A673 (cell line): ENCODE measurements at regions of chr1 and their contacts with region 1.

Region 1: DNA sequence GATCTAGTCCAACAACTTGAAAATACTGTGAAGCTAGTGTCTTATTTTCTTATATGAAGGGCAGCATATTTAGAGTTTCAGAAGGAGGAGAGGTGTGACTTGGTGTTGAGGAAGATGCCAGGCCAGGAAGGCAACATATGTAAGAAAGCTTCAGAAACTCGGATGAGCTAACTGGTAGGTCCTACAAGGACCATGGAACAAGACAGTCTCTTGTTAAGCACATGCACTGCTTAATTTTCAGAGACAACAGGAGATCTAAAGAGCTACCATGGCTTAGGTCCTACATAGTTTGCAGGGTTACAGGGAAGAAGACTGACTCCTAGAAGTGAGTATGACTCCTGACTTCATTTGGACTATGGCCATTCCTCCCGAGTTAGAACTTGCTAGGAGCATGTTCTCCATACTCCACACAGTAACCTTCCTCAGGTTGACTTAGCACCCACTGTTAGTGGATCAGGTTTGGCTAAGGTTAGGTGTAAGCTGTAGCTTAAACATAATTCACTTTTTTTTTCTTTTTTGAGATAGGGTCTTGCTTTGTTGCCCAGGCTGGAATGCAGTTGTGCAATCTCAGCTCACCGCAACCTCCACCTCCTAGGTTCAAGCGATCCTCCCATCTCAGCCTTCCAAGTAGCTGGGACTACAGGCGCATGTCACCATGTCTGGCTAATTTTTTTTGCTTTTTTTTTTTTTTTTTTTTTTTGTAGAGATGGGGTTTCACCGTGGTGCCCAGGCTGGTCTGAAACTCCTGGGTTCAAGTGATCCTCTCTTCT is 31.0 kb downstream of the ANGEL2 start:
- DNase-seq: no peak
- H3K4me3 ChIP-seq: no peak overlapping the region
- H3K27ac ChIP-seq: no peak overlapping the region
- H3K4me1 ChIP-seq: no peaks in the 10 kb centered on the region
- H3K27me3 ChIP-seq: no peaks in the 10 kb centered on the region
- CTCF ChIP-seq: no peak

Region 2: DNA sequence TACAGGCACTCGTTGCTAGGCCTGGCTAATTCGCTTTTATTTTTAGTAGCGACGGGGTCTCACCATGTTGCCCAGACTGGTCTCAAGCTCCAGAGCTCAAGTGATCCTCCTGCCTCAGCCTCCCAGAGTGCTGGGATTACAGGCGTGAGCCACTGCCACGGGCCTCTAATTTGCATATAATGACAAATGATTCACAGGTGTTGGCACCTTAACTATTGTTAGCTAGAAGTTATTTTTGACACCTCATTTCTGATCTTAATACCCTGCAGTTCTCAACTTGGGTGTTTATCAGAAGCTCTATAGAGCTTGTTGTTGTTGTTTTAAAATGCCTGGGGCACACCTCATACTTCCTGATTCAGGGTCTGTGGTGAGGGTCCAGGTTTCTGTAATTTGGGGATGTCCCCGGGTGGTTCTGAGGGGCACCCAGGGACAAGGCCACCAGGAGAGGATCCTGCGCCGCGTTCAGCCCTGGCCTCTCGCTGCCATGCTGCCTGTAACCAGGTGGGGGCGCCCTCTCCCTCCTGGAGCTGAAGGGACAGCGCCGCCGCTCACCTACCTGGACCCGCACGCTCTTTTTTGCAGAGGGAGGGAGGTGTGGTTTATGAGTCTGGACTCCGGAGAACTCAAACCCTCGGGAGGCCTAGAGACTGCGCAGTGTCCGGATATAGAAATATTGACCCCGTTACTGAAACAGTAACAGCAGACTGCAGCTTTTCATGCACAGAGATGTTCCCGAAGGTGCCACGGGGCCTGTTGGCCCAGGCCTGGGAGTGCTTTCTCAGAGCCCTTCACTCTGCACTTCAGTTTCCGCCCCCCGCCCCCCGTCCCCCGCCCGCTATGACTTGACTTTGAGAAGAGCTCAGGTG is 1286.3 kb before region 1 on chr1:
- CTCF ChIA-PET with region 1: no interaction called
- POLR2A ChIA-PET with region 1: no interaction called
- intact Hi-C with region 1: no loop called
- DNase-seq: peak; percentile 77
- H3K4me3 ChIP-seq: no peak overlapping the region
- H3K27ac ChIP-seq: no peak overlapping the region
- H3K4me1 ChIP-seq: peaks cover 15% of the 10 kb centered on the region
- H3K27me3 ChIP-seq: no peaks in the 10 kb centered on the region
- CTCF ChIP-seq: peak; percentile 99

Region 3: DNA sequence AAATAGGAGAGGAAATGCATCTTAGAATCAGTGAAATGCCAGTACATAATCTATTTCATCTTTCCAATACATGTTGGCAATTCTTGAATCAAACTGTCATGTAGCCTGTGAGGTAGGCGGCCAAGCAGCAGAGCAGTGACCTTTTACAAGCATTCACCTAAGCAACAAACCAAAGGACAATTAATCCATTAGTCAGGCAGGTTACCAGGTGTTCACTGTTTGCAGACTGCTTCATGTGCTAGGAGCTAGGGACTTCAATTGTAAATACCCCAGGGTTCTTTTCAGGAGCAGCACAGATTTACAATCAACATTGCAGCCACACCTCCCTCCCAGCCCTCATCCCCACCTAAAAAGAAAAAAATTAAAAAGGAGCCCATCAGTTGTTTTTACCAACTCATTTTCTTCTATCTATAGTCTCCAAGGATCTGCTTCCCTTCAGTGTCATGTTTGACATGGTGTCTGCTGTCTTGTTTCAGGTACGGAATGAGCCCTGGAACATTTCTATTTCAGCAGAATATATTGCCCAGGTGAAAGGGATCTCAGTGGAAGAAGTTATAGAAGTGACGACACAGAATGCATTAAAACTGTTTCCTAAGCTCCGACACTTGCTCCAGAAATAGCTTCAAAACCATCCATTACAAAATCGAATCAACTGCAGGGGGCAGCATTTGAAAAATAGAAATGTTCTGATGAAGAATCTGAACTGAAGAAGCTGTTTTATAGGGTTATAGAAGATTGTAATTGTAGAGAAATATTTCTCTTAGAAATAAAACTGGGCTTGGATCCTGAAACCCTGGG is 170.0 kb before region 1 on chr1:
- CTCF ChIA-PET with region 1: no interaction called
- POLR2A ChIA-PET with region 1: interaction called, 15 read pairs
- intact Hi-C with region 1: no loop called
- DNase-seq: peak; percentile 26
- H3K4me3 ChIP-seq: no peak overlapping the region
- H3K27ac ChIP-seq: no peak overlapping the region
- H3K4me1 ChIP-seq: no peaks in the 10 kb centered on the region
- H3K27me3 ChIP-seq: no peaks in the 10 kb centered on the region
- CTCF ChIP-seq: peak; percentile 55; the same call in 1 of the 2 replicates

Region 4: GRCh38 chr1:212967801-212968200 is 16.9 kb before region 1 on chr1:
- CTCF ChIA-PET with region 1: no interaction called
- POLR2A ChIA-PET with region 1: no interaction called
- intact Hi-C with region 1: no loop called
- DNase-seq: peak; percentile 72
- H3K4me3 ChIP-seq: no peak overlapping the region
- H3K27ac ChIP-seq: no peak overlapping the region
- H3K4me1 ChIP-seq: peaks cover 7% of the 10 kb centered on the region
- H3K27me3 ChIP-seq: no peaks in the 10 kb centered on the region
- CTCF ChIP-seq: peak; percentile 68